Mammary epithelial cell (primary cell): ENCODE measurements at regions of chr19 and their contacts with region 1.

Region 1: DNA sequence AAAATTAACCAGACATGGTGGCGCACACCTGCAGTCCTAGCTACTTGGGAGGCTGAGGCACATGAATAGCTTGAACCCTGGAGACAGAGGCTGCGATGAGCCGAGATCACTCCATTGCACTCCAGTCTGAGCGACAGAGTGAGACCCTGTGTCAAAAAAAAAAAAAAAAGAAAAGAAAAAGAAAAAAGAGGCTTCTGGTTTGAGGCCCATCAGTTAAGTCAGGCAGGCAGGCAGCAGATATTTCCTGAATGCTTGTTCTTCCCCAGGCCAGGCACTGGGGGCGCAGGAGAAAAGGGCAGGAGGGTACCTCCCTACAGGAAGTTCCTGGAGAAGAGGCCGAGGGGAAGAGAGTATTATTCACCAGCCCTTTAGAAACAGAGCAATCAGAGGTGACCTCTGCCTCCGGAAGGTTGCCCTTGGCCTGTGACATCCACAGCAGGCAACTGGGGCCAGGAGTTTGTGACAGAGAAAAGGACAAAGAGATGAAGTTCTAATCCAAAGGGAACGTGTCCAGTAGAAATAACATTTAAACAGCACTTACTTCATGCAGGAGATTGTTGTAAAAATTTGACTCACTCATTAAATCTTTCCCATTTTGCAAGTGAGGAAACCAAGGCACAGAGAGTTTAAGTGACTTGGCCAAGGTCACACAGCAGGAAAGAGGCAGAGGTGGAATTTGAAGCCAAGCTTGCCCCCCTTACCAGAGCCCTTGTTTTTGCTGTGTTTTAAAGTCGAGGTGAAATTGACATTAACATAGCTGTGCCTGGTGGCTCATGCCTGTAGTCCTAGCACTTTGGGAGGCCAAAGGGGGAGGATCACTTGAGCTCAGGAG is 4.3 kb upstream of the RLN3 start:
- DNase-seq: peak; percentile 34
- H3K4me3 ChIP-seq: no peak overlapping the region
- H3K27ac ChIP-seq: no peak overlapping the region
- H3K4me1 ChIP-seq: no peaks in the 10 kb centered on the region
- H3K27me3 ChIP-seq: no peaks in the 10 kb centered on the region
- CTCF ChIP-seq: peak; percentile 50 to 51

Region 2: DNA sequence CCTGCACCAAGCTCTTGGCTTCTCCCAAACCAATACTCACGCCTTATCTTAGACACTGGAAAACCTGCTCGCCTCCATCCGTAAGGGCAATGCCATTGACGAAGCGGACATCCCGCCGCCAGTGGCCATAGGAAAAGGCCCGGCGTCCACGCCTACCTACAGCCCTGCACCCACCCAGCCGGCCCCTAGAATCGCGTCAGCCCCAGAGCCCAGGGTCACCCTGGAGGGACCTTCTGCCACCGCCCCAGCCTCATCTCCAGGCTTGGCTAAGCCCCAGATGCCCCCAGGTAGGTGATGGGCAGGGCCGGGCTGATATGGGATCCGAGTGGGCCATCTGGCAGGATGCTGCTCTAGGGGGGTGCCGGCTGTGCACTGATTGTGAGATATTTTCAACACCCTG is 110.3 kb before region 1 on chr19:
- CTCF ChIA-PET with region 1: no interaction called
- dilution Hi-C with region 1: loop called (anchors 5 kb)
- in situ Hi-C with region 1: no loop called
- intact Hi-C with region 1: no loop called
- DNase-seq: no peak
- H3K4me3 ChIP-seq: no peak overlapping the region
- H3K27ac ChIP-seq: no peak overlapping the region
- H3K4me1 ChIP-seq: no peaks in the 10 kb centered on the region
- H3K27me3 ChIP-seq: no peaks in the 10 kb centered on the region
- CTCF ChIP-seq: no peak

Region 3: GRCh38 chr19:14035709-14036108 is 12.1 kb after region 1 on chr19:
- CTCF ChIA-PET with region 1: no interaction called
- dilution Hi-C with region 1: no loop called
- in situ Hi-C with region 1: no loop called
- intact Hi-C with region 1: no loop called
- DNase-seq: no peak
- H3K4me3 ChIP-seq: no peak overlapping the region
- H3K27ac ChIP-seq: no peak overlapping the region
- H3K4me1 ChIP-seq: no peaks in the 10 kb centered on the region
- H3K27me3 ChIP-seq: no peaks in the 10 kb centered on the region
- CTCF ChIP-seq: no peak